ENCODE measurements at regions of chr3 and their contacts with region 1.

Region 1: DNA sequence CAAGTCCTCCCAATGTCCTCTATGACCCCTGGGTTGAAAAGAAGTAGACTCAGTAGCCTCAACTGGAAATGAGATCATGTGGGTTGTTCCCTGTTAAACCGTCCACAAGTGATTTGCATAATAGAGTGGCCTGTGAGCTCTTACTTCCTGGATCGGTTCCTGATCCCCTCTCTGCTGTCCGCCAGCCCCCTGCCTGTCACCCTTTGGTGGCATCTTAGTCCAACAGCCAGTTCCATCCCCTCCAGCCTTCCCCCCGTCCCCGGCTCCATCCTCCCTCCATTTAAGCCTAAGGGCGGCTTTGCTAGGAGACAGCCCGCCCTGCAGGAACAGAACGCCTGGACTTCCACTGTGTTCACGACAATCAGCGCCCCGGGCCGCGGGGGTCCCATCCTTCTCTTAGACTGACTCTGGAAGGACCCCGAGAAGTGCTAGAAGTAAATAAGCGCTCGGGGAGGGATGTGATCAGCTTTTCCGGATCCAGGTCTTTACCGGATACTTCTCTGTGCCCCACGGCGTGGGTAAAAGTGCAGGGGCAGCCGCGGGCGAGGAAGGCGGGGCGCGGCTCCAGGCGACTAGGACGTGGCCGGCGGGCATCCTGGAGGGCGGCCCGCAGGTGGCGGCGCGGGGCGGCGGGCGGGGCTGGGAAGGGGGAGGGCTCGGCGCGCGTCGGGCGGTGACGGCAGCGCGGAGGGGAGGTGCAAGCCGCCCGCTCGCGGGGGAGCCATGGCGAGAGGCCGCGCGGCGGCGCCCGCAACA is 51.2 kb upstream of the ULK4 start:
- DNase-seq: peak; percentile 77
- H3K4me3 ChIP-seq: peak overlapping the region; percentile 62 to 75
- H3K27ac ChIP-seq: peak overlapping the region in 1 of 2 donors; percentile 75
- H3K4me1 ChIP-seq: peaks cover 15% of the 10 kb centered on the region
- H3K27me3 ChIP-seq: no peaks in the 10 kb centered on the region
- CTCF ChIP-seq: no peak
- POLR2A ChIP-seq: no peak

Region 2: DNA sequence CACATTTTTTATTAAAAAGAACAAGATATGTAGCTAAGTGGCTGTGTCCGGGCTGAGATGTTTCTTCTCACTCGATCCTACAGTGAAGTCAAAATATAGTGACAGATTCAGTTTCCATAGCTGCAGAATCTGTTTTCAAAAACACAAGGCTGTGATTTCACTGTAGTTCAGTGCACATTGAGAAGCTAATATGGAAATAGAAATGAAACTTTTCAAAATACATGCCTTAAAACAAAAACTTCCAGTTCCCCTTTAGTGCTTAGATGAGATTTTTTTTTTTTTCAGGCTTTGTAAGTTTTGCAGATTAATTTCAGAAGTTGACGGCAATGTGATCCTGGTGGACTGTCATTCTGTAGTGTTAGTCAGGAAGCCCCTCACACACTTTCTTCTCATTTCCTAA is 54.2 kb after region 1 on chr3:
- intact Hi-C with region 1: loop called (anchors 10 kb)
- DNase-seq: no peak
- H3K4me3 ChIP-seq: no peak overlapping the region
- H3K27ac ChIP-seq: no peak overlapping the region
- H3K4me1 ChIP-seq: peaks cover 38% of the 10 kb centered on the region
- H3K27me3 ChIP-seq: no peaks in the 10 kb centered on the region
- CTCF ChIP-seq: no peak
- POLR2A ChIP-seq: no peak

Region 3: GRCh38 chr3:42090973-42091731 is 78.0 kb after region 1 on chr3 and contains the start of gene TRAK1:
- intact Hi-C with region 1: loop called (anchors 10 kb)
- DNase-seq: peak; percentile 83
- H3K4me3 ChIP-seq: no peak within 1 kb of the TSS
- H3K27ac ChIP-seq: peak within 1 kb of the TSS; percentile 0 to 65
- H3K4me1 ChIP-seq: no peaks in the 10 kb centered on the region
- H3K27me3 ChIP-seq: no peaks in the 10 kb centered on the region
- CTCF ChIP-seq: no peak
- POLR2A ChIP-seq: no peak
- total RNA-seq, gene TRAK1: 94.1 to 95.9 TPM

Region 4: DNA sequence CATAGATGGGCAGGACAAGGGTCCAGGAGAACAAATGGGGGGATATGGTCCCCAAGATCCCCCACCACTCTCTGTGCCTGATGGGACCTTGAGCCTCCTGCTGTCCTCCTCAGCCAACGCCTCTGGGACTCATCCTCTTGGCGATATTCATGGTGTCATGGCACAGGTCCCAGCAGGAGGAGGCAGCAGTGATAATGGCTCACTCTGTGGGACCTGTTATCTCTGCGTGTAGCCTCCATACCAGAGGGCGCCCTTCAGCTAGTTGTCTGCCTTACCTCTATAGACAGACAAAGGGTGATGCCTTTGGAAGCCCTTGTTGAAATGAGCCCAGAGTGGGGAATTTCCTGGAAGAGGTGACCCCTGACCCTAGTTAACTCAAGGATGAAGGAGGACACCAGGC is 647.8 kb after region 1 on chr3:
- intact Hi-C with region 1: loop called (anchors 10 kb)
- DNase-seq: peak; percentile 80
- H3K4me3 ChIP-seq: no peak overlapping the region
- H3K27ac ChIP-seq: no peak overlapping the region
- H3K4me1 ChIP-seq: peaks cover 11% of the 10 kb centered on the region
- H3K27me3 ChIP-seq: no peaks in the 10 kb centered on the region
- CTCF ChIP-seq: peak in 2 of 3 experiments; percentile 6 to 22
- POLR2A ChIP-seq: no peak